Posterior vena cava (tissue), 2 donors: ENCODE measurements at regions of chr19 and their contacts with region 1.

Region 1: GRCh38 chr19:11018179-11018578 is 57.3 kb downstream of the SMARCA4 start:
- DNase-seq: no peak

Region 2: GRCh38 chr19:10292206-10292788 is 725.9 kb before region 1 on chr19:
- intact Hi-C with region 1: no loop called
- DNase-seq: peak; percentile 95

Region 3: GRCh38 chr19:10952809-10953208 is 65.4 kb before region 1 on chr19:
- intact Hi-C with region 1: loop called in 1 of 2 experiments (anchors 10 kb)
- DNase-seq: no peak

Region 4: GRCh38 chr19:11059511-11060358 is 41.6 kb after region 1 on chr19:
- intact Hi-C with region 1: loop called in 1 of 2 experiments (anchors 1 kb)
- DNase-seq: no peak